GM10248 (cell line): ENCODE measurements at regions of chr10 and their contacts with region 1.

Region 1: DNA sequence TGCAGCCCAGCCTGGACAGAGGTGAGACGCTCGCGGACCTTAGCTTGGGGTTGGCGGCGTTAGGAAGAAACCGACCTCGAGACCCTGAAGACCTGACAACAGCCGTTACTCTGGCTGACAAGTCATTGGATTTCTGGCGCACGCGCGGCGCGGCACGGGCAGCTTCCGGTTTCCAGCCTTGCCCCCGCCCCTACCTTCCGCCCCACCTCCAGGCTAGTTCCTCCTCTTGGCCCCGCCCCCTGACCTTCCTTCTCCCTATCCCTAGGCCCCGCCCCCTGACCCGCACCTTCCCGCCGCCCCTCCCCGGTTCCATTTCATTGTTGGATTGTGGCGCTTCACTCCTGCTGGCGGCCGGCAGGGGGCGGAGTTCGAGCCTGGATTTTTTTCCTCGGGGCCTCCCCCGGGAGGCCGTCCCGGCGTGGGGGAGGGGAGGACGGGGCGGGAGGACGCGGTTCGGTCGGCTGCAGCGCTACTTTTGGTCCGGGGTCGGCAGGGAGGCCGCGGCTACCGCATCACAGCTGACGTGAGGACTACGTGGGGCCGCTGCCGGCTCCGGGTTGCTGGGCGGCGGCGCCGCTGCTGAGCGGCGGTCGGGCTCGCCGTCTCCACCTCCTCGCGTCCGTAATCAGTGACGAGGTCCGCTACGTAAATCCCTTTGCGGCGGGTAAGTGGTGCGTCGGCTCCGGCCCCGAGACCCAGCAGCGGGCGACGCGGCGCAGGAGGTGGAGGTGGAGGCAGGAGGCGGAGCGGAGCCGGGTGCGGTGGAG is at the start of gene CREM:
- DNase-seq: peak; percentile 96
- CTCF ChIP-seq: peak; percentile 75

Region 2: GRCh38 chr10:35153716-35154479 is 27.2 kb after region 1 on chr10:
- CTCF ChIA-PET with region 1: interaction called, 7 read pairs
- POLR2A ChIA-PET with region 1: interaction called, 20 read pairs
- DNase-seq: no peak
- CTCF ChIP-seq: no peak

Region 3: DNA sequence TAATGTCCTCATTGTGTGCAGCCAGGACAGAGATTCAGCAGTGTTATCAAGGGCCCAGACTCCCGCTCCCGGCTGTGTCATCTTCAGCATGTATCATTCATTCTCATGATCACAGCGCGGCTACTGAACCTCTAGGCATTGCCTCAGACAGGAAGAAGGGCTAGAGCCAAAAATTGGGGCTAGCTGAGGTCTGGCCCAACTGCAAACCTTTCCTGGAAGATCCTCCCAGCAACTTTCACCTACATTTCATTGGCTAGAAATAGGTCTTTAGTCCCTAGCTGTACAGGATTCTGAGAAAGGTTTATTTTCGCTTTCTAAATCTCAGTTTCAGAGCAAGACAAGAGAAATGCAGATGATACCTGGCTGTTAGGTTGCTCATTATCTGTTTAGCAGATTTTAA is 81.8 kb after region 1 on chr10:
- CTCF ChIA-PET with region 1: interaction called, 225 read pairs
- POLR2A ChIA-PET with region 1: no interaction called
- DNase-seq: no peak
- CTCF ChIP-seq: no peak

Region 4: DNA sequence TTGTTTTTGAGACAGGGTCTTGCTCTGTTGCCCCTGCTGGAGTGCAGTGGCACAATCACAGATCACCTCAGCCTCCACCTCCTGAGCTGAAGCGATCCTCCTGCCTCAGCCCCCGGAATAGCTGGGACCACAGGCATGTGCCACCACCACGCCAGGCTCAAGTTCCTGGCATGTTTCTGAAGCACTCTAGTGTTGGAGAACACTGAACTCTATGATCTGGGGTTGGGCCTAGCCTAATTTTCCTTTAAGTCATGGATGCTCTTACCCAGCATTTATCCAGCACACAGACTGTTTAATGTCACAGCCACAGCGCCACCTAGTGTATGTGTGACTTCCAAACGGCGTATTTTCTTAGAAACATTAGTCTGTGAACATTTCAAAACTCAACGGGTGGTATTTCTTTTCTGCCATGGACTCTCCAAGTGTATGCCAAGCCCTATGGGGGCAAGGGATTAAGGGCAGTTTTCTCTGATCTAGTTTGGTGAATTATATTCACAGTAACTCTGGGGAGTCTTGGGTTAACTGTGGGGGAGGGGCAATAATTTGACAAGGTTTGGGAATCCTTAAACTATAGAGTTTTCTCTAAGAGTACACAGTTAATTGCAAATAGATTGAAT is 91.7 kb after region 1 on chr10:
- CTCF ChIA-PET with region 1: interaction called, 225 read pairs
- POLR2A ChIA-PET with region 1: interaction called, 4 read pairs
- DNase-seq: peak; percentile 74
- CTCF ChIP-seq: peak; percentile 70

Region 5: DNA sequence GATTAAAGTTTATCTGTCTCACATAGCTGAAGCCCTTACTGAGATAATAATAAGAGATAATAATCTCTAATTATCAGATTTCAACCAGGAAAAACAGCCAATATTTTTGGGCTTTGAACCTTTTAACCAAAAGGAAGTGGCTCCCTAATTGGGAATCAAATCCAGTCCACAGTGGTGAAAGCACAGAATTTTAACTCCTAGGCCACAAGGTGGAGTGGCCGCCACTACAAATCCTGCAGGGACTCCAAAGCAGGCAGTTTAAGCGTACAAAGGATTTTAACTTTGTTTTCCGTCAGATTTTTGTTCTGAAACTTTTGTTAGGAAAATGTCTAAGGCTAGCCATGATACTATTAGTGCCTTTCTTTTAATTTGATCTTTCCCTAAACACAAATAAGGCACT is 110.0 kb after region 1 on chr10:
- CTCF ChIA-PET with region 1: interaction called, 14 read pairs
- POLR2A ChIA-PET with region 1: no interaction called
- DNase-seq: no peak
- CTCF ChIP-seq: peak; percentile 12